PC-9 (cell line): ENCODE measurements at regions of chr17 and their contacts with region 1.

Region 1: GRCh38 chr17:75904749-75905521 is at the start of gene MRPL38:
- DNase-seq: peak; percentile 86 to 99
- H3K4me3 ChIP-seq: peak within 1 kb of the TSS; percentile 76
- H3K27ac ChIP-seq: peak within 1 kb of the TSS; percentile 56
- H3K4me1 ChIP-seq: peaks cover 12% of the 10 kb centered on the region
- H3K27me3 ChIP-seq: no peaks in the 10 kb centered on the region
- CTCF ChIP-seq: peak; percentile 96
- total RNA-seq, gene MRPL38: 127 and 136 TPM in 2 replicates

Region 2: GRCh38 chr17:75978938-75979704 is 74.2 kb after region 1 on chr17 and contains the starts of genes ACOX1 and TEN1:
- CTCF ChIA-PET with region 1: no interaction called
- POLR2A ChIA-PET with region 1: no interaction called
- intact Hi-C with region 1: loop called (anchors 1 kb)
- DNase-seq: peak; percentile 91 to 96
- H3K4me3 ChIP-seq: peak within 1 kb of the TSS; percentile 82
- H3K27ac ChIP-seq: peak within 1 kb of the TSS; percentile 87
- H3K4me1 ChIP-seq: peaks cover 63% of the 10 kb centered on the region
- H3K27me3 ChIP-seq: no peaks in the 10 kb centered on the region
- CTCF ChIP-seq: peak; percentile 21; the same call in 1 of the 2 replicates
- total RNA-seq, gene ACOX1: 35.5 and 37.1 TPM in 2 replicates
- total RNA-seq, gene TEN1: 19.6 and 22.7 TPM in 2 replicates

Region 3: GRCh38 chr17:76053246-76054116 is 148.5 kb after region 1 on chr17:
- CTCF ChIA-PET with region 1: interaction called, 15 read pairs
- POLR2A ChIA-PET with region 1: no interaction called
- intact Hi-C with region 1: loop called (anchors 1 kb)
- DNase-seq: peak; percentile 56 to 79
- H3K4me3 ChIP-seq: peak overlapping the region; percentile 22; the same call in 1 of the 2 replicates
- H3K27ac ChIP-seq: peak overlapping the region; percentile 94
- H3K4me1 ChIP-seq: peaks cover 60% of the 10 kb centered on the region
- H3K27me3 ChIP-seq: no peaks in the 10 kb centered on the region
- CTCF ChIP-seq: no peak

Region 4: DNA sequence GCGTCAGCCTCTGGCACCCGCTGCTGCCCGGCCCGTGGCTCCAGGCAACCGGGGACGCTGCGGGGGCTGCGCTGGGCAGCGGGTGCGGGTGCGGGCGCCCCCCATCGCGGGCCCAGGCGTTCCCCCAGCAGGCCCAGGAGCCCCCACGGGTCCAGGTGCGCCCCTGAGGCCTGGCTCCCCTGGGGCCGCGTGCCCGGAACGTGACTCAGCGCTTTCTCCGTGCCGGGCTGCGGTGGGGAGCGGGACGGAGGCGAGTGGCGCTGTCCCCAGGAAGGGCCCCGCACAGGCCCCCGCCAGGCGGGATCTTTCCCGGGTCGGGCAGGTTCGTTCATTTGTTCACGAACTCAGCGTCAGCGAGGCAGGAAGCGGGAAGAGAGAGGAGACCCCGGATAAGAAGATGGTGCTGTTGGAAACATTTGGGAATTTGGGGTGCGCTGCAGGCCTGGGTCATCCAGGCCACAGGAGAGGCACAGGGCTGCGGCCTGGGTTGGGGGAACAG is 217.0 kb after region 1 on chr17:
- CTCF ChIA-PET with region 1: no interaction called
- POLR2A ChIA-PET with region 1: no interaction called
- intact Hi-C with region 1: loop called (anchors 5 kb)
- DNase-seq: no peak
- H3K4me3 ChIP-seq: no peak overlapping the region
- H3K27ac ChIP-seq: no peak overlapping the region
- H3K4me1 ChIP-seq: no peaks in the 10 kb centered on the region
- H3K27me3 ChIP-seq: no peaks in the 10 kb centered on the region
- CTCF ChIP-seq: no peak

Region 5: DNA sequence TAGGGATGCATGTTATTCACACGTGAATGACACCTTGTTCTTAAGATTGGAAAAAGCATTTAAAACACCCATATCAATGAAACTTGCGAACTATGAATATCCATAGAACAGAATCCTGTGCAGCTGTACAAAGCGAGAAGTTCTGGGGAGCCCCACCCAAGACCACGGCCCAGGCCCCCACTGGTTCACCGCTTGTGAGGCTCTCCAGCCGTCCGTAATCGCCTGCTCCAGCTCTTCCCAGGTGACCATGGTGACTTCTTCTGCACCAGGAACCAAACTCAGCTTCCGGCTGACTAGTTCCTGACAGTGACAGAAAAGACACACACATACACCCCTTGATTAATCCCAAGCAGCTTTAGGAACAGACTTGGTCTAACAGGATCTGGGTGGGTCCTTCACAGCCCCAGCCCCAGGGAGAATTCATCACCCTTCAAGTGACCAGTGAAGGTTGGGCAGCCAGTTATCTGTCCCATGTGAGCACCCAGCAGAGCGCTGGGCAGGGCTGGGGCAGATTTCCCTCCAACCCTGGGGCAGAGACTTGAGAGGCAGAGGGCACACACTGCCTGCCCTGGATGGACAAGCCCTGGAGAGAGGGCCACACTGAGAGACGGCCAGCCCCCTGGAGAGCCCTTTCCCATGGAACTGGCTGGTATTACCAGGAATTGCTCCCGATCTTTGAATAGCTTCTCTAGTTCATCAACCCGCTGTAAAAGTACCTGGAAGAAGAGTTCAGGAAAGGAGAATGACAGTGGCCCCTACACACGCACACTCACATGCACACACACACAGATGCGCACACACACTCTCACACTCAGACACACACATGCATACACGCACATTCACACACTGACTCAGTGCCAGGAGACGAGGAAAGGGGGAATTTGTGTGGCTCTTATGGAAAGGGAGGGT is 399.5 kb after region 1 on chr17:
- CTCF ChIA-PET with region 1: no interaction called
- POLR2A ChIA-PET with region 1: no interaction called
- intact Hi-C with region 1: loop called (anchors 5 kb)
- DNase-seq: no peak
- H3K4me3 ChIP-seq: no peak overlapping the region
- H3K27ac ChIP-seq: no peak overlapping the region
- H3K4me1 ChIP-seq: no peaks in the 10 kb centered on the region
- H3K27me3 ChIP-seq: no peaks in the 10 kb centered on the region
- CTCF ChIP-seq: no peak